Activated T-helper 2 cell treated with anti-CD3 and anti-CD28 coated beads, Interferon-gamma antibody, Interleukin-2, Interleukin-4, amounts not matched to agents 10 μg/mL and 5 μg/mL and 100 μg/mL, durations not matched to agents 14 hours and 24 hours and 36 hours (primary cell): ENCODE measurements at regions of chr13 and their contacts with region 1.

Region 1: DNA sequence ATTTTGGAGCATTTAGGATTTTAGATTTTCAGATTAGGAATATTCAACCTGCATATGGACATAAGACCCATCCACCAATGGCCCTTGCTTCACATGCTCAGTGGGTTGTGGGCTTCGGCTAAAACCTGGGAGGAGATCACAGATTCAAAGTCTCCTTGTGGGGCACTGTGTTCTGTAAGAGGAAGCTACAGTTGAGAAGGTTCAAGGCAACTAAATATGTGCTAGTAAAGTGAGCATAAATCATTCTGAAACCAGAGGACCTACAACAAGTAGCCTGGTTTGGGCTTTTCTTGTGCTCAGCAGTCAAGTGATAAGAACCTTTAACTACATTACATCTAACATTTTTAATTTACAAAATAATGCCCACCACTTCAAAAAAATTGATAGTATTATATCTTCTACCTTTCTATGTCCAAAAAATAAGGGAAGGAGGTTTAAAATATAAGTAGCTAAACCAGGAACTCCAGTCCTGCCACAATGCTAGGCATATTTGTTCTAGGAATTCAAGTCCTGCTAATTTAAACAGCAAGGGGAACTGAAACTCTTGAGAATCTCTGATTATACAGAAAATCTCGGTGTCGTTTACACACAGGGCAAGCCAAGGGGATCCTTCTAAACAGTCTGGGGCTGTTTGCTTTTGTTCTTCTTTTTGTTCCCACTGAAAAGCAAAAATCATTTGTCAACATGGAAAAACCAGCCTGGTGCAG is 36.6 kb downstream of the FOXO1 start:
- DNase-seq: no peak
- H3K4me3 Mint-ChIP-seq: no peak overlapping the region
- H3K27ac Mint-ChIP-seq: peak overlapping the region; percentile 15
- H3K4me1 Mint-ChIP-seq: peaks cover 50% of the 10 kb centered on the region
- H3K27me3 Mint-ChIP-seq: no peaks in the 10 kb centered on the region

Region 2: GRCh38 chr13:40540328-40541044 is 89.3 kb before region 1 on chr13:
- intact Hi-C with region 1: no loop called
- DNase-seq: no peak
- H3K4me3 Mint-ChIP-seq: no peak overlapping the region
- H3K27ac Mint-ChIP-seq: no peak overlapping the region
- H3K4me1 Mint-ChIP-seq: peaks cover 1% of the 10 kb centered on the region
- H3K27me3 Mint-ChIP-seq: no peaks in the 10 kb centered on the region

Region 3: GRCh38 chr13:40613192-40613818 is 16.5 kb before region 1 on chr13:
- intact Hi-C with region 1: loop called (anchors 2 kb)
- DNase-seq: peak; percentile 55
- H3K4me3 Mint-ChIP-seq: peak overlapping the region; percentile 80
- H3K27ac Mint-ChIP-seq: peak overlapping the region; percentile 95
- H3K4me1 Mint-ChIP-seq: peaks cover 64% of the 10 kb centered on the region
- H3K27me3 Mint-ChIP-seq: no peaks in the 10 kb centered on the region

Region 4: DNA sequence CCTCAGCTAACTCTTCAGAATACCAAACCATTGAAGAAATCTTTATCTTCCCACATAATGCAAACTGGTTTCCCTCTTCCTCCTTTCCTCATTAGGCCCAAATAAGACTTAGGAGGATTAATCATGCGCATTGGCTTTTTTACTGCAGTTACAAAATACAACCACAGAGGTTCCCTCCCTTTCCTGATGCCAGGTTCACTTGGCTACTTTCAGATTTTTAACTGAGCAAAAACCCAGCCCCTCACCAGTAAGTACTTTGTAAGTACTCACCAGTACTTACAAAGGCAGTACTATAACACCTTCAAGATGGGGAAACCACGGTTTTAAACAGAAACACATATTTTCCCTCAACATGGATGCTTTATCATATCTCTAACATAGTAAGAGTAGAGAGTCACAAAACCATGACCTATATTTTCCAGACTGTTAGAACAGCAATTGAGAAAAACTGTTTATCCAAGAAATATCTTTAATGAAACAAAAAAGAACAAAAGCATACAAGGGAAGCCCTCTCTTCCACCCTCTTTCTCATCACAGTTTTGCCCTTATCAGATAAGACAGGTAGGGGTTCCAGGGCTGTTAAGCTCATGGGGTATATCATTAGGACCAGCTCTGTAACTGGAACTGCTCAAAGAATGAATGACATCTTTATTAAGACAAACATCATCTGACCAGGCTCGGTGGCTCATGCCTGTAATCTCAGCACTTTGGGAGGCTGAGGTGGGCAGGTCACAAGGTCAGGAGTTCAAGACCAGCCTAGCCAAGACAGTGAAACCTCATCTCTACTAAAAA is 23.9 kb after region 1 on chr13:
- intact Hi-C with region 1: loop called (anchors 2 kb)
- DNase-seq: no peak
- H3K4me3 Mint-ChIP-seq: peak overlapping the region; percentile 65
- H3K27ac Mint-ChIP-seq: peak overlapping the region; percentile 93
- H3K4me1 Mint-ChIP-seq: peaks cover 71% of the 10 kb centered on the region
- H3K27me3 Mint-ChIP-seq: no peaks in the 10 kb centered on the region

Region 5: GRCh38 chr13:40749327-40749726 is 119.5 kb after region 1 on chr13:
- intact Hi-C with region 1: no loop called
- DNase-seq: no peak
- H3K4me3 Mint-ChIP-seq: no peak overlapping the region
- H3K27ac Mint-ChIP-seq: no peak overlapping the region
- H3K4me1 Mint-ChIP-seq: peaks cover 4% of the 10 kb centered on the region
- H3K27me3 Mint-ChIP-seq: no peaks in the 10 kb centered on the region

Region 6: DNA sequence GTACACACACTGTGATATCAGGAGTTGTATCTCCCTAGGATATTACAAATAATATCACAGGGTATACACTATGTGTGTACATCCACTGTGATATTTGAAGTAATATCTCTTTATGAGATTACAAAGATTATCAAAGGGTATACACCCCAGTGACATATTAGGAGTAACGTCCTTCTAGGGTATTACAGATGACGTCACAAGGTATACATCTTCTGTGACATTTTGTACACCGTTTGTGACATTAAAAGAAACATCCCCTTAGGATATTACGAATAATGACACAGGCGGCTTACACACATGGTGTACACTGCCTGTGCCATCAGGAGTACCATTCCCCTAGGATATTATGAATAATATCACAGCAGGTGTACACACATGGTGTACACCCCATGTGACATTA is 814.1 kb after region 1 on chr13:
- intact Hi-C with region 1: no loop called
- DNase-seq: no peak
- H3K4me3 Mint-ChIP-seq: no peak overlapping the region
- H3K27ac Mint-ChIP-seq: no peak overlapping the region
- H3K4me1 Mint-ChIP-seq: peaks cover 4% of the 10 kb centered on the region
- H3K27me3 Mint-ChIP-seq: no peaks in the 10 kb centered on the region